OCI-LY7 (cell line): ENCODE measurements at regions of chr6 and their contacts with region 1.

Region 1: GRCh38 chr6:18595774-18596530 is 208.8 kb downstream of the RNF144B start:
- DNase-seq: peak; percentile 57
- H3K4me3 ChIP-seq: no peak overlapping the region
- H3K27ac ChIP-seq: no peak overlapping the region
- H3K4me1 ChIP-seq: no peaks in the 10 kb centered on the region
- CTCF ChIP-seq: peak; percentile 98

Region 2: DNA sequence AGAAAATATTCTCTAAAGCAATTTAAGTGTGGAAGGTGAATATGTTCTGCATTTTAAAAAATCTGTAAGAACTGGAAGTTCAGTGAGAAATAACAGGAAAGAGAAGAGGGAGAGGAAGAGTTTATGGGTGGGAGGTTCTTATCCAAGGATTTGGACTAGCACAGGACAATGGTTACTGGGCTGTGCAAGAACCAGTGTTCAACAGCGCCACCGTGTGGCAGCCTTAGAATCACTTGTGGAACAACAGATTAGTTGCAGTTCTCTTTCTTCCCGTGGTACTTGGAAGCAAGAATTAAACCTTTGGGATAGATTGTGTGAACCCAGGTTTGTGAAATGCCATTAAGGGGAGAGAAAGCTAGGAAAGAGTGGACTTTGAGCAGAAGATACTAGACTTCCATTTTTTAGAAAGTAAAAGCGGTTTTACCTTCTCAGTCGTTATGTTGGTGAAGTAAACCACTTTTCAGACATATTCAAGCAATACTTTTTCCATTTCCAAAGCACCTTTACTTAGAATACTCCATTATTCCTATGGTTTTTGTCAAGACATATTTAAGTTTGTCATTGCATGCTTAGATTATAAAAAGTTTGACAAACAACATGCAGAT is 227.9 kb after region 1 on chr6:
- CTCF ChIA-PET with region 1: no interaction called
- POLR2A ChIA-PET with region 1: no interaction called
- intact Hi-C with region 1: loop called (anchors 1 kb)
- DNase-seq: peak; percentile 77
- H3K4me3 ChIP-seq: no peak overlapping the region
- H3K27ac ChIP-seq: no peak overlapping the region
- H3K4me1 ChIP-seq: no peaks in the 10 kb centered on the region
- CTCF ChIP-seq: peak; percentile 98